Activated CD4-positive, alpha-beta memory T cell treated with anti-CD3 and anti-CD28 coated beads for 36 hours (primary cell): ENCODE measurements at regions of chr7 and their contacts with region 1.

Region 1: GRCh38 chr7:5494683-5495561 is 71.3 kb upstream of the TNRC18 start:
- DNase-seq: peak; percentile 87
- H3K4me3 Mint-ChIP-seq: no peak overlapping the region
- H3K27ac Mint-ChIP-seq: no peak overlapping the region
- H3K4me1 Mint-ChIP-seq: peaks cover 9% of the 10 kb centered on the region
- H3K27me3 Mint-ChIP-seq: no peaks in the 10 kb centered on the region

Region 2: GRCh38 chr7:5526100-5526905 is 31.4 kb after region 1 on chr7:
- CTCF ChIA-PET with region 1: interaction called, 14 read pairs
- POLR2A ChIA-PET with region 1: interaction called, 5 read pairs
- intact Hi-C with region 1: no loop called
- DNase-seq: peak; percentile 60
- H3K4me3 Mint-ChIP-seq: peak overlapping the region; percentile 97
- H3K27ac Mint-ChIP-seq: peak overlapping the region; percentile 94
- H3K4me1 Mint-ChIP-seq: peaks cover 33% of the 10 kb centered on the region
- H3K27me3 Mint-ChIP-seq: peaks cover 11% of the 10 kb centered on the region

Region 3: DNA sequence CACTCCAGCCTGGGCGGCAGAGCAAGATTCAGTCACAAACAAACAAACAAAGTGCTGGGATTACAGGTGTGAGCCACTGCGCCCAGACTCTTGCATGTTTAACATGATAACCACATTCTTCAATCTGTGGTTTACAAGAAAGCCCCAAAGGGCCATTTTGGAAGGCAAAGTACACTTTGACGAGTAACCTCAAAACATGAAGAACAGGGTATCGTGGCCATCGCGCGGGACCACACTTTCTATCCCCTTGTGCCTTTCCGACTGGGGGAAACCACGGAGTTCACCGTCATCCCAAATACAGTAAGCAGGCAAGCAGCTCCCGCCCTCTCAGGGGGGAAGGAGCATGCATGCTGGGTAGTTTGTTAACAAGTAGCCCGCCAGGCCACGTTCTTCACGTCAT is 161.3 kb after region 1 on chr7:
- CTCF ChIA-PET with region 1: interaction called, 14 read pairs
- POLR2A ChIA-PET with region 1: no interaction called
- intact Hi-C with region 1: no loop called
- DNase-seq: no peak
- H3K4me3 Mint-ChIP-seq: no peak overlapping the region
- H3K27ac Mint-ChIP-seq: no peak overlapping the region
- H3K4me1 Mint-ChIP-seq: peaks cover 3% of the 10 kb centered on the region
- H3K27me3 Mint-ChIP-seq: no peaks in the 10 kb centered on the region

Region 4: DNA sequence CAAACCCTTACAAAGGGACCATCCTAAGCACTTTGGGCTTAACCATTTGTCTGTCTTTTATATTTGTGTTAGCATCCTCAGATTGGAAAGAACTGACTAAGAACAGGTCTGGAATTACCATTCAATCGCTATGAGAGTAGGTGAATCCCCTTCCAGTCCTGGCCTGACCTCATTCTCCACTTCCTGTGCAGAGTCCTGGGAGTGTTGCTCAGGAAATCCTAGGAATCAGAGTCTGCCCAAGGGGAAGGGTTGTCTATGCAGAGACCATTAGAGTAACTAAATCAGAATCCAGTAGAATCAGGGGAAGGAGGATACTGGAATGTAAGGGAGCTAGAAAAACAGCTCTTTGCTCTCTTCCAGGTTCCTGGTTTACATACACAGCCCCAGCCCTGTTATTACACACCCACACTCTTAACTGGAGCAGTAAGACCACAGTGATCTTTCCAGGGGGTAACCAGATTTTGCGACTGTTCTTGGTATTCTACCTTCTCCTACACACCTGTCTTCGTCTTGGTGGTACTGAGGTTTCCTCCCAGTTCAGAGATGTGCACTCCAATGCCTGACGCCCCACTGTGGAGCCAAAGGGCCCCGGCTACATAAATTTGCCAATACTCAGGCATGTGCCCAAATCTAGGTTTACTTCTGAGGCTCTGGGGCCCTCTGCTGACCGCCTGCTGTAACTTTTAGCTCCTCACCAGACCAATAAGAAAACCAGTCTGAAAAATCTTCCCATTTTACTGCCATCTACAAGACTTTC is 182.8 kb after region 1 on chr7:
- CTCF ChIA-PET with region 1: interaction called, 25 read pairs
- POLR2A ChIA-PET with region 1: no interaction called
- intact Hi-C with region 1: no loop called
- DNase-seq: peak; percentile 70
- H3K4me3 Mint-ChIP-seq: no peak overlapping the region
- H3K27ac Mint-ChIP-seq: peak overlapping the region; percentile 20
- H3K4me1 Mint-ChIP-seq: peaks cover 42% of the 10 kb centered on the region
- H3K27me3 Mint-ChIP-seq: no peaks in the 10 kb centered on the region

Region 5: DNA sequence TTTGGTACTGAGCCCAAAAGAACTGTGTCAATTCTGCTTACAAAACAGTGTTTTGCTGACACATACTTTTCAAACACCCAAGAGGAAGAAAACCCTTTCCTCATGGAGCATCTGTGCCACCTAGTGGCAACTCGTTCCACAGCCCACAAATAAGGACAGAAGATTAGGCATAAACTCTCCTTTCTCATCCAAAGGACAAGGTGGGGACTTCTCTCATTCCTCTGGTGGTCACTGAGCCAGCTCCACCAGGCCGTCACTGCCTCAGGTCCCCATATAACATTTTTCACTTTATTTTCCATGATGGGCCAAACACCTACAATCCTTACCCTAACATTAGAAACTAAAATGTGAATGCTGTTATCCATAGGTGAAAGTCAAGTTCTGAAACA is 209.6 kb after region 1 on chr7:
- CTCF ChIA-PET with region 1: interaction called, 35 read pairs
- POLR2A ChIA-PET with region 1: no interaction called
- intact Hi-C with region 1: loop called (anchors 1 kb)
- DNase-seq: peak; percentile 85
- H3K4me3 Mint-ChIP-seq: no peak overlapping the region
- H3K27ac Mint-ChIP-seq: no peak overlapping the region
- H3K4me1 Mint-ChIP-seq: peaks cover 73% of the 10 kb centered on the region
- H3K27me3 Mint-ChIP-seq: no peaks in the 10 kb centered on the region